Activated naive CD4-positive, alpha-beta T cell treated with anti-CD3 and anti-CD28 coated beads for 36 hours (primary cell): ENCODE measurements at regions of chr6 and their contacts with region 1.

Region 1: DNA sequence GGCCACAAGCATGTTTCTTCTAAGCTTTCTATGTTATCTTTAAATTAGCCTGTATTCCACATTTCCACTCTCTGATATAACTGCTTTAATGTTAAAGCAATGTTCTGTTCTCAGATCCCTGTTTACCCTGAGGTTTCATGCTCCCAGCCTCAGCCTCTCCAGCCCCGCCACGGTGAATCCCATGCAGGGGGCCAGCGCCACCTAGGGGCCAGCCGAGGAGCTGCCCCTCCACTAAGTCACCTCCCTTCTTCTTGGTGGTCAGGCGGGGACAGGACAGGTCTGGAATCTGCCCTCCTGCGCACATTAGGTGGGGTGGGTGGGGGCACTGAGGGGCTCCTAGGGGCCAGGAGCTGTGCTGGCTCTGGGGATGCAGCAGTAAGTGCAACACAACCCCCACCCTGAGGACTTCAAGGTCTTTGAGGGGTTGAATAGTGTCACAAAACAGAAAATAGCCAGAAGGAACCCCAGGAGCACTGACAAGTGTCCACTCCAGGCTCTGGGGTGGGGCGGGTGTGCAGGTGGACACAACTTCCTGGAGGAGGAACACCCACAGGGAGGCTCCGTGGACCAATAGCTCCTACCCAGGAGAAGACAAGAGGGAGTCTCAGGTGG is 61.6 kb downstream of the RAB44 start:
- DNase-seq: peak; percentile 89
- H3K4me3 Mint-ChIP-seq: no peak overlapping the region
- H3K27ac Mint-ChIP-seq: no peak overlapping the region
- H3K4me1 Mint-ChIP-seq: peaks cover 39% of the 10 kb centered on the region
- H3K27me3 Mint-ChIP-seq: no peaks in the 10 kb centered on the region

Region 2: GRCh38 chr6:36423101-36423824 is 336.0 kb before region 1 on chr6:
- CTCF ChIA-PET with region 1: interaction called, 7 read pairs
- intact Hi-C with region 1: loop called (anchors 1 kb)
- DNase-seq: peak; percentile 99
- H3K4me3 Mint-ChIP-seq: peak overlapping the region; percentile 89
- H3K27ac Mint-ChIP-seq: peak overlapping the region; percentile 95
- H3K4me1 Mint-ChIP-seq: peaks cover 15% of the 10 kb centered on the region
- H3K27me3 Mint-ChIP-seq: no peaks in the 10 kb centered on the region

Region 3: GRCh38 chr6:36546920-36547645 is 212.2 kb before region 1 on chr6 and contains the start of gene STK38:
- CTCF ChIA-PET with region 1: no interaction called
- intact Hi-C with region 1: loop called (anchors 5 kb)
- DNase-seq: peak; percentile 95
- H3K4me3 Mint-ChIP-seq: peak within 1 kb of the TSS; percentile 97
- H3K27ac Mint-ChIP-seq: peak within 1 kb of the TSS; percentile 97
- H3K4me1 Mint-ChIP-seq: peaks cover 39% of the 10 kb centered on the region
- H3K27me3 Mint-ChIP-seq: no peaks in the 10 kb centered on the region
- total RNA-seq, gene STK38: 23.6 to 24.4 TPM

Region 4: DNA sequence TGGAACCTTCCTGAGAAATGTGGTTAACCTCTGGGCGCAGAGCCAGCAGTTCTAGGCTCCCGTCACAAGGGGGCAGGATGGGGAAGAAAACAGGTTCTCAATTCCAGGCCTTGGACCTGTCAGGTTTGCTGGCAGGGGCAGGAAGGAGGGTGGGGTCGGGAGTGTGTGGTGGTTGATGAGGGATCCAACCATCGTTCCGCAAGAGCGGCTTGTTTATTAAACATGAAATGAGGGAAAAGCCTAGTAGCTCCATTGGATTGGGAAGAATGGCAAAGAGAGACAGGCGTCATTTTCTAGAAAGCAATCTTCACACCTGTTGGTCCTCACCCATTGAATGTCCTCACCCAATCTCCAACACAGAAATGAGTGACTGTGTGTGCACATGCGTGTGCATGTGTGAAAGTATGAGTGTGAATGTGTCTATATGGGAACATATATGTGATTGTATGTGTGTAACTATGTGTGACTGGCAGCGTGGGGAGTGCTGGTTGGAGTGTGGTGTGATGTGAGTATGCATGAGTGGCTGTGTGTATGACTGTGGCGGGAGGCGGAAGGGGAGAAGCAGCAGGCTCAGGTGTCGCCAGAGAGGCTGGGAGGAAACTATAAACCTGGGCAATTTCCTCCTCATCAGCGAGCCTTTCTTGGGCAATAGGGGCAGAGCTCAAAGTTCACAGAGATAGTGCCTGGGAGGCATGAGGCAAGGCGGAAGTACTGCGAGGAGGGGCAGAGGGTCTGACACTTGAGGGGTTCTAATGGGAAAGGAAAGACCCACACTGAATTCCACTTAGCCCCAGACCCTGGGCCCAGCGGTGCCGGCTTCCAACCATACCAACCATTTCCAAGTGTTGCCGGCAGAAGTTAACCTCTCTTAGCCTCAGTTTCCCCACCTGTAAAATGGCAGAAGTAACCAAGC is 135.5 kb before region 1 on chr6:
- CTCF ChIA-PET with region 1: interaction called, 71 read pairs
- intact Hi-C with region 1: loop called (anchors 1 kb)
- DNase-seq: peak; percentile 91
- H3K4me3 Mint-ChIP-seq: no peak overlapping the region
- H3K27ac Mint-ChIP-seq: no peak overlapping the region
- H3K4me1 Mint-ChIP-seq: peaks cover 14% of the 10 kb centered on the region
- H3K27me3 Mint-ChIP-seq: no peaks in the 10 kb centered on the region

Region 5: GRCh38 chr6:36694616-36695015 is 64.6 kb before region 1 on chr6:
- CTCF ChIA-PET with region 1: interaction called, 9 read pairs
- intact Hi-C with region 1: loop called (anchors 1 kb)
- DNase-seq: no peak
- H3K4me3 Mint-ChIP-seq: no peak overlapping the region
- H3K27ac Mint-ChIP-seq: no peak overlapping the region
- H3K4me1 Mint-ChIP-seq: peaks cover 26% of the 10 kb centered on the region
- H3K27me3 Mint-ChIP-seq: peaks cover 5% of the 10 kb centered on the region

Region 6: GRCh38 chr6:36735110-36736071 is 23.9 kb before region 1 on chr6:
- CTCF ChIA-PET with region 1: interaction called, 20 read pairs
- intact Hi-C with region 1: loop called (anchors 1 kb)
- DNase-seq: peak; percentile 87
- H3K4me3 Mint-ChIP-seq: peak overlapping the region; percentile 59
- H3K27ac Mint-ChIP-seq: peak overlapping the region; percentile 91
- H3K4me1 Mint-ChIP-seq: peaks cover 28% of the 10 kb centered on the region
- H3K27me3 Mint-ChIP-seq: no peaks in the 10 kb centered on the region